OCI-LY7 (cell line): ENCODE measurements at regions of chr5 and their contacts with region 1.

Region 1: GRCh38 chr5:56415356-56415765 is 182.2 kb upstream of the ANKRD55 start:
- DNase-seq: peak; percentile 93
- H3K4me3 ChIP-seq: peak overlapping the region; percentile 58
- H3K27ac ChIP-seq: peak overlapping the region; percentile 84
- H3K4me1 ChIP-seq: peaks cover 50% of the 10 kb centered on the region
- CTCF ChIP-seq: no peak

Region 2: DNA sequence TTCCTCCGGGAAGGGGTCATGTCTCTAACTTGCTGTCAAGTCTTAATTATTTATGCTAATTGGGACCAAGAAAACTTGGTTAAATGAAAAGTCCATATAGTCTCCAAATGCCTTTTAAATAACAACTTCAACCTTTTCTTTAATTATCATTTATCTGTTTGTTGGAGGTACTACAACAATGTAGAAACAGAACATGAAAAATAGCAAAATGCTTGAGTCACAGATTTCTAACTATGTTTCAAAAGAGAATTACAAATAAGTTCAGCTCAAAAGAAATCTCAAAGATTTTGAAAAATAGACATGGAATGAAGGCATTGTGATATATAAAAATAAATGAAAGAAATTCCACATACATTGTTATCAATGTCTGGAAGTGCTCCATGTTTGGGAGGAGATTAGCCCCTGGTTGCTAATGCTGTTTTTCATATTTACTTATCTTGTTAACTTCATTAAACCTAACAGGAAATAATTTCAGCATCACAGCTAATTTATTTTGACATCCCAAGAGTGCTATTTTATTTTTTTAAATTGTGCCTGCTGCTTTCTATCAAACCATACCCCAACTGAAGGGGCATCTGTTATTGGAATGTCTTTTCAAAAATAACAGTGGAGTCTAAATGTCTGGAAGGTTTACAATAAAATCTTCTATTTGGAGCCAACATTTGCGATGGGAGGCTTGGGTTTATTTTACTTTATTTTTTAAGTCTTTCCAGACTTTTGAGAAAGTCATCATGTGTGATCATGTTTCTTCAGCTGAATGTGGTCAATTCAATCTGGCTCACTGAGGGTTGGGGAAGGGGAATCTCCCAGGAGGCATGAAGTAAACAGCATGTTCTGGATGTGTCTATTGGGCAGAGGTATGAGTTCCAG is 129.1 kb before region 1 on chr5:
- CTCF ChIA-PET with region 1: no interaction called
- POLR2A ChIA-PET with region 1: no interaction called
- intact Hi-C with region 1: no loop called
- DNase-seq: no peak
- H3K4me3 ChIP-seq: no peak overlapping the region
- H3K27ac ChIP-seq: no peak overlapping the region
- H3K4me1 ChIP-seq: no peaks in the 10 kb centered on the region
- CTCF ChIP-seq: no peak

Region 3: GRCh38 chr5:56402266-56403220 is 12.8 kb before region 1 on chr5:
- CTCF ChIA-PET with region 1: no interaction called
- POLR2A ChIA-PET with region 1: interaction called, 12 read pairs
- intact Hi-C with region 1: no loop called
- DNase-seq: no peak
- H3K4me3 ChIP-seq: no peak overlapping the region
- H3K27ac ChIP-seq: no peak overlapping the region
- H3K4me1 ChIP-seq: no peaks in the 10 kb centered on the region
- CTCF ChIP-seq: no peak

Region 4: GRCh38 chr5:56481428-56482357 is 66.3 kb after region 1 on chr5:
- CTCF ChIA-PET with region 1: interaction called, 3 read pairs
- POLR2A ChIA-PET with region 1: interaction called, 8 read pairs
- intact Hi-C with region 1: loop called (anchors 5 kb)
- DNase-seq: peak; percentile 56
- H3K4me3 ChIP-seq: peak overlapping the region; percentile 65
- H3K27ac ChIP-seq: peak overlapping the region; percentile 60
- H3K4me1 ChIP-seq: peaks cover 40% of the 10 kb centered on the region
- CTCF ChIP-seq: peak; percentile 81